IMR-90 (cell line): ENCODE measurements at regions of chr12 and their contacts with region 1.

Region 1: DNA sequence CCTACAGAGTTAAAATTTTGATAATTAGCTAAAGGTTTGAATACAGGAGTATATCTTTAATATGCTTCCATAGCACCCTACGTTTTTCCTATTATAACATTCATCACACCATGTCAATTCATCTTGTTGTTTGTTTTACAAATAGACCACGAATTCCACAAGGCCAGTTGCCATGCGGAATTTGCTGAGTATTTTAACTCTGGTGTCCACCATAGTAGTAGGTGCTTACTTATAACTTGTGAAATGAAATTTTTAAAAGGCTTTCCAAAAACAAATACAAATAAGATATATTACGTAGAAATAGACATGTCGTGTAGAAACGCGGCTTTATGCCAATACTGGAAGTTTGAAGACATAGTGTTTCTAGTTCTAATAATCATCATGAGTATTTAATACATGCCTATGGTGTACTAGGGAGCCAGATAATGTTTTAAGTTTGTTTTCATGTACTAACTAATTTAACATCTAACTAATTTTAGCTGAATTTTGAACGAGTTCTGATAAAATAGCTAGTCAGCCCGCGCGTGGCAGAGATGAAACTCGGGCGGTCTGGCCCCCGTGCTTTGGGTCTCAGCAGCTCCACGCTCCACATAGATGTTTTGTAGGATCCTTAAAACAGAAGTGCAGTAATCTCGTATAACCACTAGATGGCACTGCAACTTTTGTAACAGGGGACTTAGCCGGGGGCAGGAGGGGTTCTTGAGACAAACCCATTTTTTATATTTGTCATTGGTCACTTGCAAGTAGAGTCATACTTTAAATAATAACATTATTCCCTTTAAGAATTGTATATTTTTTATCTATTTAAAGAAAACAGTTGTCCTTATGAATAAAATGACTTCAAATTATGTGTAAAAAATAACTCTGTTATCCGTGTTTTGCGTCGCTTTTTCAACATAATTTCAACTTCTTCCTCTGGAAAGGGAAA is 10.2 kb downstream of the CD69 start:
- DNase-seq: peak; percentile 56
- ATAC-seq: peak; percentile 88
- H3K4me3 ChIP-seq: no peak overlapping the region
- H3K27ac ChIP-seq: no peak overlapping the region
- H3K4me1 ChIP-seq: no peaks in the 10 kb centered on the region
- H3K27me3 ChIP-seq: peaks cover 3% of the 10 kb centered on the region; the same call in 1 of the 2 replicates
- CTCF ChIP-seq: peak; percentile 73
- POLR2A ChIP-seq: no peak
- RAD21 ChIP-seq: peak; percentile 71

Region 2: GRCh38 chr12:9673404-9674225 is 76.9 kb before region 1 on chr12:
- CTCF ChIA-PET with region 1: no interaction called
- POLR2A ChIA-PET with region 1: no interaction called
- dilution Hi-C with region 1: no loop called
- in situ Hi-C with region 1: no loop called
- intact Hi-C with region 1: no loop called
- DNase-seq: peak; percentile 92
- ATAC-seq: peak; percentile 100
- H3K4me3 ChIP-seq: no peak overlapping the region
- H3K27ac ChIP-seq: no peak overlapping the region; the same call in 1 of the 2 replicates
- H3K4me1 ChIP-seq: peaks cover 10% of the 10 kb centered on the region
- H3K27me3 ChIP-seq: no peaks in the 10 kb centered on the region
- CTCF ChIP-seq: no peak
- POLR2A ChIP-seq: no peak
- RAD21 ChIP-seq: 0 out of 2 replicates have a peak, but pooled peaks have one; percentile 4

Region 3: DNA sequence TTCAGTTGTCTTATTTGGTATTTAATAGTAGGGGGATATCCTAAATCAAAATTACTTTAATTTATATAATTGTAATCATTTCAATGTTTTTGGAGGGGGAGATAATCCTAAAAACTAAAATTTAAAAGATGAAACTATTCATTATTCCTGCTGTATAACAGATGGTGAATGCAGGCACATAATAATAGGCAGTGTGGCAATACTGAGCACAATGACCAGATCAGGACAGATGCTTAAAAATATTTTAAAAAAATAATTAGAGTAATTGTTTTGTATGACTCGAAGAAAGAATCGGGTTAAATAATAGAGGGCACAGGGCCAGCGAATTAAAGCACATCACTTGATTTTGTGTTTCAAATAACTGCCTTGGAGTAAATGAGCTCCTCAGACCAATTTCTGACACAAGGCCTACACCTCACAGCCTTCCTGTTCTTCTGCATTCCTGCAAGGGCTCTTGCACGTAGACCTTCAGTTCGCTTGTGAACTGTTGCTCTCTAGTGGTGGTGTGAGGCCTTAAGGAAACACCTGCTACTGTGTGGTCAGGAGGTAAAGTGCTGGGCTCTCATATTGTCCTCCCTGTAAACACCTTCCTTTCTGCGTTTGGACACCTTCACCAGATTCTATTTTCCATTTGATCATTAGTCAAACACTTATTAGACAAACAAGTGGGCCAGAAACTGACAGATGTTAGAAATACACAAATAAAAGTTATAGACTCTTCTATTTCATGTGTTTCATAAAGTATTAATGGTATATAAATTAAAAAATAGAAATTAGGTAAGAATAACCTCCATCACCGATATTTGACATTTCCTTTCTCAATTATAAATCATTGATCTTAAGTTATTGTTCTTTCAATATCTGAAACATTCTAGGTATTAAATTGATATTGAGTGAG is 47.4 kb after region 1 on chr12:
- CTCF ChIA-PET with region 1: interaction called, 39 read pairs
- POLR2A ChIA-PET with region 1: no interaction called
- dilution Hi-C with region 1: no loop called
- in situ Hi-C with region 1: no loop called
- intact Hi-C with region 1: loop called (anchors 1 kb)
- DNase-seq: peak; percentile 56
- ATAC-seq: peak; percentile 82
- H3K4me3 ChIP-seq: no peak overlapping the region
- H3K27ac ChIP-seq: no peak overlapping the region
- H3K4me1 ChIP-seq: no peaks in the 10 kb centered on the region
- H3K27me3 ChIP-seq: no peaks in the 10 kb centered on the region
- CTCF ChIP-seq: peak; percentile 51
- POLR2A ChIP-seq: no peak
- RAD21 ChIP-seq: peak; percentile 55

Region 4: DNA sequence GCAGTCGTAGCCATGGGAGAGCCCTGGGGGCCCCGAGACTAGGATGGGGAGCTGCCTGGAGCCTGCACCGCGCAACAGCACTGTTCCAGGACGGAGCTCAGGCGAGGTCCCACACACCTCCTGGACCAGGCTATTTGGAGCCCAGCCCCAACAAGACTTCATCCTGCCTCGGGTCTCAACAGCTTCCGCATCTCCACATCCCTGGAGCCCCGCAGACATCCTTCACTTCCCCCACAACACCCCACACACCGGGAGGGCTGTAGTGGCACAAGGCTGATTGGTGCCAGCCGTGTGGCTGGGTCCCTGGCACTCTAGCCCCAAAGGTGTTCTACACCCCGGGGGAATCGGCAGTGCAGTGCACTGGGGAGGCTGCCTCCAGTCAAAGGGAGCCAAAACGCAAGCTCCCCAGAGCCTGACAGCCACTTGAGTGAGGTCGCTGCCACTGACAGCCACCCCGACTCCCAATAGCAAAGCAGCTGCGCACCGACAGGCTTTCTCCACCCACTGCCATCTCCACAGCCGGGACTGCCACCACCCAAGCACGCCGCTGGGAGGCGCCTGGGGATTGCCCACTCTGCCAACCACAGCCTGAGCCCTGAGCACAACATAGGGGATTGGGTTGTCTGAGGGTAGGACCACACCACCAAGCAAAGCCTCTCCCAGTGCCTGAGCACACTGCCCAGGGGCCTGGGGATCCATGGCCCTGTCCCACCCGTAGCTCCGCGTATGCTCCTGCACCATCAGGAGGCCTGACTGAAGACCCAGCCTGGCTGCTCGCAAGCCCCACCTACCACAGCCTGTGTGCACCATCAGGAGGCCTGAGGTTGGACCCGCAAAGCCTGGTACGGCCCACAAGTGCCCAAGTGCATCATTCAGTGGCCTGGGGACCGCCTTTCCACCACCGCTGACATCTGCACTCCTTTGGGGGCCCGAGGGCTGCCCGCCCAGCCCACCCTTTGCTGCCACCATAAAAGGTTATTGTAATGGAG is 63.6 kb after region 1 on chr12:
- CTCF ChIA-PET with region 1: interaction called, 9 read pairs
- POLR2A ChIA-PET with region 1: no interaction called
- dilution Hi-C with region 1: no loop called
- in situ Hi-C with region 1: no loop called
- intact Hi-C with region 1: loop called (anchors 1 kb)
- DNase-seq: peak; percentile 17
- ATAC-seq: peak; percentile 100
- H3K4me3 ChIP-seq: no peak overlapping the region; the same call in 1 of the 2 replicates
- H3K27ac ChIP-seq: no peak overlapping the region
- H3K4me1 ChIP-seq: no peaks in the 10 kb centered on the region
- H3K27me3 ChIP-seq: peaks cover 11% of the 10 kb centered on the region
- CTCF ChIP-seq: peak; percentile 78
- POLR2A ChIP-seq: no peak
- RAD21 ChIP-seq: peak; percentile 71

Region 5: GRCh38 chr12:9925708-9926393 is 175.3 kb after region 1 on chr12:
- CTCF ChIA-PET with region 1: interaction called, 16 read pairs
- POLR2A ChIA-PET with region 1: no interaction called
- dilution Hi-C with region 1: no loop called
- in situ Hi-C with region 1: loop called (anchors 5 kb)
- intact Hi-C with region 1: loop called (anchors 1 kb)
- DNase-seq: peak; percentile 41
- ATAC-seq: peak; percentile 75
- H3K4me3 ChIP-seq: no peak overlapping the region
- H3K27ac ChIP-seq: no peak overlapping the region
- H3K4me1 ChIP-seq: no peaks in the 10 kb centered on the region
- H3K27me3 ChIP-seq: no peaks in the 10 kb centered on the region; the same call in 1 of the 2 replicates
- CTCF ChIP-seq: peak; percentile 55
- POLR2A ChIP-seq: no peak
- RAD21 ChIP-seq: peak; percentile 47

Region 6: DNA sequence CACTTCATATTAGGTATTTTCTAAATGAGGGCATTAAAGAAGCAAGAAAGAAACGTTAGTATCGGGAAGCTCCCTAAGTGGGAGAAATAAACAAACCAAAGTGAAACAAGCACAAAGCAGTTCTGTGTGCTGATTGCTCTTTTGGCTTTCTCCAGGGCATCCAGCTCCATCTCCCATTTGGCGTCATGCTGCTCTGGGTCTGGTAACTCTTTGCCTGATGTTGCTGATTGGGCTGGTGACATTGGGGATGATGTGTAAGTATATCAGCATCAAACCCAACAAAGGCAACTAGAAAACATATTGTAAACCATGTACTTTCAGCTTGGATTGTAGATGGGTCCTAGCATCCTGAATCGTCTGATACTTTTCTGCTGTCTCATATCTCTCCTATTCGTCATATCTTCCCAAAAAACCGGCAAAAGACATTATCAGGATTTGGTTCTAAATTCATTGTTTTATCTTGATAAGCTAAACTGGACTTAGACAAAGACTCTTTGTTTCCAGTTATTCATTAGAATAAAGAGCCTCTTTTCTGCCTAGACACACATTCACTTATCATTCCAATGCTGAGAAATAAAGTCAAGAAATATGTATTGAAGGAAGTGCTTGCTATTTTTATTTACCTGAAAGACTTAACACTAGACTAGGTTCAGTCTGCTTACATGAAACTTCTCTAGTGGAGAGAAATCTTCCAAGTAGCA is 262.2 kb after region 1 on chr12:
- CTCF ChIA-PET with region 1: interaction called, 7 read pairs
- POLR2A ChIA-PET with region 1: no interaction called
- dilution Hi-C with region 1: no loop called
- in situ Hi-C with region 1: no loop called
- intact Hi-C with region 1: loop called (anchors 5 kb)
- DNase-seq: no peak
- ATAC-seq: no peak
- H3K4me3 ChIP-seq: no peak overlapping the region
- H3K27ac ChIP-seq: no peak overlapping the region
- H3K4me1 ChIP-seq: peaks cover 5% of the 10 kb centered on the region
- H3K27me3 ChIP-seq: peaks cover 2% of the 10 kb centered on the region
- CTCF ChIP-seq: no peak
- POLR2A ChIP-seq: no peak
- RAD21 ChIP-seq: no peak

Region 7: GRCh38 chr12:10033783-10034545 is 283.4 kb after region 1 on chr12:
- CTCF ChIA-PET with region 1: interaction called, 3 read pairs
- POLR2A ChIA-PET with region 1: no interaction called
- dilution Hi-C with region 1: no loop called
- in situ Hi-C with region 1: no loop called
- intact Hi-C with region 1: loop called (anchors 5 kb)
- DNase-seq: peak; percentile 18
- ATAC-seq: peak; percentile 50
- H3K4me3 ChIP-seq: no peak overlapping the region
- H3K27ac ChIP-seq: no peak overlapping the region
- H3K4me1 ChIP-seq: no peaks in the 10 kb centered on the region
- H3K27me3 ChIP-seq: no peaks in the 10 kb centered on the region
- CTCF ChIP-seq: peak; percentile 72
- POLR2A ChIP-seq: no peak
- RAD21 ChIP-seq: peak; percentile 72

Region 8: DNA sequence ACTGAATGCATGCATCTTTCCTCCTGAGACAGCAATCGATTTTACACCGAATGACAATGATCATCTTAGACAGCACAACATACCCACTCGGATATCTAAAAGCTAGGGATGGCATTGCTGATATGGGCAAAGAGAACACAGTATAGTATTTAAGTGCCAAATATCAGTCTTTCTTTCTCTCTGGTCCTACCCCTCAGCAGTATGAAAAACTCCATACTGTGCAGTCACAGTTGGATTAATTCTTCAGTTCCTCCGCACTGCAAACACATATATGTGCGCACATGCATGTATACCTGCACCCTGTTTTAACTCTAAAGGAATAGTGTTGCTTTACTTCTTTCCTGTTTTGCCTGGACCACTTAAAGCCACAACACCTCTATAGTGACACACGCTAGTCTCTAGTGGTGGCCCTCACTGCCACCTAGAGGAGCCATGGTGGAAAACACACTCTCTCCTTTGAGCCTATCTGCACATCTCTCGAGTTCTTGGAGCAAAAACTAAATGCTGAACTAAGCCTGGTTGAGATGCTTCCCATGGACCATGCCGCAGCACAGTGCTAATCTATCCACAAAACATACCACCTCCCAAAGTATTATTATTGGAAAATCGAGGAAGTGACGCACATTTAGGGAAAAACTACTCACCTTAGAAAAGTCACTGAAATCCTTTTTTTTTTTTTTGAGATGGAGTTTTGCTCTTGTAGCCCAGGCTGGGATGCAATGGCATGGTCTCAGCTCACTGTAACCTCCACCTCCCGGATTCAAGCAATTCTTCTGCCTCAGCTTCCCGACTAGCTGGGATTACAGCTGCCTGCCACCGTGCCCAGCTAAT is 440.2 kb after region 1 on chr12:
- CTCF ChIA-PET with region 1: no interaction called
- POLR2A ChIA-PET with region 1: no interaction called
- dilution Hi-C with region 1: no loop called
- in situ Hi-C with region 1: no loop called
- intact Hi-C with region 1: loop called (anchors 5 kb)
- DNase-seq: peak; percentile 77
- ATAC-seq: peak; percentile 87
- H3K4me3 ChIP-seq: no peak overlapping the region
- H3K27ac ChIP-seq: peak overlapping the region; percentile 34; the same call in 1 of the 2 replicates
- H3K4me1 ChIP-seq: peaks cover 12% of the 10 kb centered on the region
- H3K27me3 ChIP-seq: no peaks in the 10 kb centered on the region
- CTCF ChIP-seq: peak; percentile 85
- POLR2A ChIP-seq: no peak
- RAD21 ChIP-seq: peak; percentile 87